Transverse colon (tissue), 4 donors: ENCODE measurements at regions of chr1 and their contacts with region 1.

Region 1: DNA sequence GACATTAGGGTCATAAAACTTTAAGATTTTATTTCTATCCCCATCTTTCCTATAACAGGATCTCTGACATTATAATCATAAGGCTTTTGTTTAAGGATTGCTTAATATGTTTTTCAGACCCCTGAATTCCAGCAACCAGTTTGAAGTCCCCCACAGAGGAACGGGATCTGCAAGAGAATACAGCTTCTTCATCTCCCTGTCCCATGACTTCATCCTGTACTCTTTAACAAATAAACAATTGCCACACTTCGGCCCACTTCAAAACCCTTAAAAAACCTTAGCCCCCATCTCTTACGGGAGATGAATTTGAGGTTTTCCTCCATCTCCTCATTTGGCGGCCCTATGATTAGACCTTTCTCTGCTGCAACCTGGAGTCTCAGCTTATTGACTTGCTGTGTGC is 35.8 kb downstream of the TESK2 start:
- DNase-seq: no peak
- H3K4me3 ChIP-seq: no peak overlapping the region
- H3K27ac ChIP-seq: no peak overlapping the region
- H3K4me1 ChIP-seq: no peaks in the 10 kb centered on the region
- H3K27me3 ChIP-seq: no peaks in the 10 kb centered on the region
- CTCF ChIP-seq: no peak
- EP300 ChIP-seq: no peak
- POLR2A ChIP-seq: no peak

Region 2: GRCh38 chr1:45512641-45513054 is 57.5 kb after region 1 on chr1:
- in situ Hi-C with region 1: no loop called
- intact Hi-C with region 1: loop called (anchors 2 kb)
- DNase-seq: peak; percentile 66
- H3K4me3 ChIP-seq: no peak overlapping the region
- H3K27ac ChIP-seq: no peak overlapping the region
- H3K4me1 ChIP-seq: peaks cover 13 to 27% (median 21%) of the 10 kb centered on the region in 4 donors
- H3K27me3 ChIP-seq: no peaks in the 10 kb centered on the region
- CTCF ChIP-seq: peak; percentile 60 to 74 (median 63)
- EP300 ChIP-seq: no peak
- POLR2A ChIP-seq: no peak